ENCODE measurements at regions of chr5 and their contacts with region 1.

Region 1: GRCh38 chr5:91383027-91383955 is at the start of gene ARRDC3:
- DNase-seq: peak; percentile 91 to 99 (median 94)

Region 2: DNA sequence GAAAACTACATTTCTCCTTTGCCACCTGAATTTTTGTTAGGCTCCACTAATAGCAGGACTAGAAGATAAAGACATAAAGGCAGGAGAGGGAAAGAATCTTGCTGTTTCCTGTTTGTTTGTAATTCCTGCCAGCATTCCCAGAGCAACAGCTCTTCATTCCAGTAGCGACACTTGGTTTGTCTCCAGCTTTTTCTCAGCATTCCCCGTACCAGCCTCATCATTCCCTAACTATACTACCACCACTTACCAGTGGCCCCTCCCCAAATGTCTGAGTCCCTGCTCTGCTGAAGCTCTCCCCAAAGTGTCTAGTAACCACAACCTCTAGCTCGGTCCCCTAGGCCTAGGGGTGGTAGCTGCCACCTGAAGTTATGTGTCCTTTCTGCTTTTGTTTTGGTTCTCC is 992.4 kb before region 1 on chr5:
- intact Hi-C with region 1: no loop called
- DNase-seq: no peak

Region 3: DNA sequence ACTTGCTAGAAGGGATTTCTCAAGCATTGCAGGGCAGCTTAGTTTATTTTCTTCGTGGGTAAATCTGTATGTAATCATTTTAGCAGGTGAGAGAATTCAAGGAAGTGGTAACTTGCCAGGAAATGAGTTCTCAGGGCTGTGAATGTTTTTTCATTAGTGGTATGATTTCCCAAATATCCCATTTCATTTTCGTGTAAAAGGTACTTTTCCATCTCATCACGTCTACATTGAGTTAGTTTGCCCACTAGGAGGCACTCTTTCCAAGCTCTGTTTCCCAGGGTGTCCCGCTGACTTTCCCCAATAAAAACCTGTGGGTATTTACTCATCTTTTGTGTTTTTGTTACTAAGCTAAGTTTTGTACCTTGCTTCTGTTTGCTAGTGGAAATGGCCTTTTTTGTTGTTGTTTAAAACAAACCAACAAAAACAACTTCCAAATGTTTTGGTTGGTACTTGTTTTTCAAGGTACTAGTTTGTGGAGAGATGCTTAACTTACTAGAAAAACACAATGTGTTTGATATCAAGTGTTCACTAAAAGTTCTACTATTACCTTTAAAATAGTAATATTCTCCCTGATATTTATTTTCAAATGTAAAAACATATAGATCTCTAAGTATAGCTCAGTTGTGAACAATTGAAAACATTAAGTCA is 451.1 kb before region 1 on chr5:
- intact Hi-C with region 1: loop called (anchors 1 kb)
- DNase-seq: peak in 4 of 10 donors; percentile 12 to 65 (median 28)

Region 4: GRCh38 chr5:91225848-91226686 is 157.2 kb before region 1 on chr5:
- intact Hi-C with region 1: loop called (anchors 10 kb)
- DNase-seq: peak in 1 of 10 donors; percentile 12

Region 5: DNA sequence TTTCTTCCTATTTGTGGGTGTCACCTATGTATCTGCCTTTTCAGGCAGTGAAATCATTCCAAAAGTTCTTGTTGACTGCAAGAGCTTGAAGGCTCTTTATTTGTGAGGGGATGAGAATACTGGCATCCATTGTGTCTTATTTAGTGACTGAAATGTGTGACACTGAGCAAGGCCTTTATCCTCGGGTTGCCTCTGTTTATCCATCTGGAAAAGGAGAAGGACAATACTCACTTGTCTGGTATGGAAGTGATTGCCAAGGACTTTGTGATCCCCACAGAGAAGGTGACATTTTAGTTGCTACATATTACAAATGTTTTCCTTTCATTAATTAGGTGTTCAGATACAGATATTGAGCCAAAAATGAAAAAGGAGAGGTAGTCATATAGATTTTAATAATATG is 80.3 kb before region 1 on chr5:
- intact Hi-C with region 1: loop called (anchors 1 kb)
- DNase-seq: peak in 1 of 10 donors; percentile 26

Region 6: DNA sequence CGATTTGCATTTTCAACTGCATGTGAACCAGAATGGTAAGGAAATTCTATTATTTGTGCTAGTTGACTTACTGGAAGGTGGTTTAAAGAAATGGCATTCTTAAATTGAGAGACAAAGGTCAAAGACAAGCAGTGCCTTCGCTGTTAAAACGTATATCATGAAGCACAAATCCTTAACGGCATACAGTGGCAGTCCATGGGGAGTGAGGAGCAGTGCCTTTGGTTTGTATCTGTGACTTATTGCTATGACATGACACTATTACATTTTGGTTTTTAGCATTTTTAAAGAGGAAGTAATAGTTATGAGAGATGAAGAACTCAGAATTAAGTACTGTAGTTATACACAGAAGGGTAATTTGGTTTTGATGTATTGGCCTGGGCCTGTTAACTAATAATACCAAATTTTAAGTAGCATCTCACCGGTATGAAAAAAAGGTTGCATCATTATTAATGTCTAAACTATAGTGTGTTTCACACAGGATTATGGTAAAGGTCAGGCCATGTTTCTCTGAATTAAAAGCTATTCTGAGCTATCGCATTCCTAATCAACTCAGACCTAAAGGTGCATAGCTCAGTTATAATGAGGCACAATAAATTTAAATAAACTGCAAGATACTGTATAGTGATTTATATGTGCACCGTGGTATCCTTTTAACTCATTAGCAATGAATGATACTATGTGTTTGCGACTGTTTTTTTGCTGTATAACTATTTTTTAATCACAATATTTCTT is 339.6 kb after region 1 on chr5:
- intact Hi-C with region 1: no loop called
- DNase-seq: no peak